ENCODE measurements at regions of chr2 and their contacts with region 1.

Region 1: GRCh38 chr2:71510196-71510807 is 56.9 kb downstream of the DYSF start:
- DNase-seq: peak; percentile 84
- ATAC-seq: peak; percentile 61

Region 2: GRCh38 chr2:70851704-70852103 is 658.6 kb before region 1 on chr2:
- intact Hi-C with region 1: no loop called
- DNase-seq: no peak
- ATAC-seq: no peak

Region 3: DNA sequence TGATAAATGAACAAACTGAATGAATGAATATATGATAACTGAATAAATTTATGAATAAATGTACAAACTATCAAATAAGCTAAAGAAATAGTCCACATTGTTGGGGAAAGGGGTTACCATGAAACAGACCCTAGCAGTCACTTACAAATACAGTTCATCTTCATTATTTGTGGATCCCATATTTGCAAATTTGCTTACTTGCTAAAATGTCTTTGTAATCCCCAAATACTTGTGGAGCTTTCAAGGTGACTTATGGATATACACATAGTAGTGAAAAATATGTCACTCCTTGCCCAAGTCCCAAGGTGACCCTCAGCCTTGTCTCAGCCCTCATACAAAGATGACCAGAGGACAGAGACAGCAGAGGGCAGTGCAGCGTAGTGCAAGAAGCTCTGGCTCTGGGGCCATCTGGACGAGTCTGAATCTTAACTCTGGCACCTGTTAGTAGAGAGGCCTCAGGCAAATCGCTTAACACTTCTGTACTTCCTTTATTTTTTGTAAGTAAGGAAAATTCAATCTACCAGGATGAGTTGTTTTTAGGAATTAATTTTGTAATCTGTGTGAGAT is 286.5 kb before region 1 on chr2:
- intact Hi-C with region 1: loop called (anchors 5 kb)
- DNase-seq: peak; percentile 71
- ATAC-seq: no peak

Region 4: DNA sequence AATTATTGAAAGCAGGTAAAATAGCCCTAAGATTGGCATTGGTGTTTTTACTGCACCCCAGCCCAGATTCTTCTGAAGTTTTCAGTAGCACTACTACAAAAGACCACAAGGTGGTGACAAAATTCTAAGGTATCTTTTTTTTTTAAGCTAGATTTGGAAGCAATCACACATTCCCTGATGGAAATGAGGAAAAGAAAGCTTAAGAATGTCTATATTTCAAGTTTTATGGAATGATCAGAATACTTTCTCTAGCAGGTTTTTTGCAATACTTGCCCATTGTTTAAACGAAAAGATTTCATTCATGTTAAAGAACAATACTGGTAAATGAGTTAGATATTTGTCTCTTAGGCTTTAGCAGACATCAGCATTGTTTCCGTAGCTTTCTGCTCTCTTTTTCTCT is 210.8 kb before region 1 on chr2:
- intact Hi-C with region 1: loop called (anchors 5 kb)
- DNase-seq: no peak
- ATAC-seq: no peak

Measured in sciatic nerve (tissue), 2 donors.